AG04450 (cell line): ENCODE measurements at regions of chr5 and their contacts with region 1.

Region 1: GRCh38 chr5:78294248-78295034 is at the start of gene AP3B1:
- DNase-seq: peak; percentile 98
- H3K4me3 ChIP-seq: peak within 1 kb of the TSS; percentile 98
- H3K27ac ChIP-seq: peak within 1 kb of the TSS; percentile 89
- H3K27me3 ChIP-seq: peaks cover 1% of the 10 kb centered on the region
- CTCF ChIP-seq: no peak
- polyA plus RNA-seq, gene AP3B1: 66.1 and 67.0 TPM in 2 replicates

Region 2: GRCh38 chr5:78308703-78309102 is 14.3 kb after region 1 on chr5:
- CTCF ChIA-PET with region 1: no interaction called
- POLR2A ChIA-PET with region 1: no interaction called
- DNase-seq: no peak
- H3K4me3 ChIP-seq: no peak overlapping the region
- H3K27ac ChIP-seq: no peak overlapping the region
- H3K27me3 ChIP-seq: peaks cover 7% of the 10 kb centered on the region
- CTCF ChIP-seq: no peak

Region 3: GRCh38 chr5:78359831-78360673 is 65.6 kb after region 1 on chr5 and contains the start of gene SCAMP1:
- CTCF ChIA-PET with region 1: interaction called, 4 read pairs
- POLR2A ChIA-PET with region 1: interaction called, 15 read pairs
- DNase-seq: peak; percentile 81
- H3K4me3 ChIP-seq: peak within 1 kb of the TSS; percentile 96
- H3K27ac ChIP-seq: peak within 1 kb of the TSS; percentile 95
- H3K27me3 ChIP-seq: no peaks in the 10 kb centered on the region
- CTCF ChIP-seq: 0 out of 2 replicates have a peak, but pooled peaks have one; percentile 30
- polyA plus RNA-seq, gene SCAMP1: 40.4 and 44.6 TPM in 2 replicates